Activated CD8-positive, alpha-beta T cell treated with anti-CD3 and anti-CD28 coated beads, Interleukin-2, amount 10 ng/mL, durations not matched to agents 7 days and 5 days (primary cell): ENCODE measurements at regions of chr22 and their contacts with region 1.

Region 1: DNA sequence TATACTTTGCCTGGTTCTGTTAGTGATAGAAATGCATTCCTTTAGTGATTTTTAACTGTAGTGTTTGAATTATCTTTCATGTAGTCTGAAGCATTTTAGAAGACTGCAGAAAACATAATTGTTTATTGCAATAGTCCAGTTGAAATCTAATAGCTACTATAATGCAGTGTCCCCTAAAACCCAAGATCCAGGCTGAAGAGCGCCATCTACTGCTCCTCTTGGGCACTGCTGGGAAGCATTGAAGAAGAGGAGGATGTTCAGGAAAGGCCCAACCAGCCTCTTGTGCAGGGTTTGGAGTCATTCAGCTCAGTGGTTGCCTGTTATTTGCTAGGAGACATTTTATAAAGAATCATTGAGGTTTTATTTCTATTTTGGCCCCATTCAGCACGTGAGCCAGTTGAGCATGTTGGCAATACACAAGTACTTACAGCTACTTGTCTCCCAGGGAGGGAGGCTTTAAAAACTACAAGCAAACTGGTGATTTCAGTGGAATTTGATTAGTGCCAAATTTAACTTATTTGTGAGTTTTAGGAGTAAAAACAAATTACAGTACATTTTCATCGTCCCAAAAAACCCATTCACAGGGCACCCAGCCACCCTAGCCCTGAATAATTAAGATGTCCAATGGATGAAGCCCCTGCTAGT is 74.9 kb upstream of the HORMAD2 start:
- DNase-seq: peak; percentile 68
- ATAC-seq: peak; percentile 57
- H3K4me3 Mint-ChIP-seq: no peak overlapping the region
- H3K27ac Mint-ChIP-seq: no peak overlapping the region
- H3K4me1 Mint-ChIP-seq: peaks cover 11% of the 10 kb centered on the region
- H3K27me3 Mint-ChIP-seq: no peaks in the 10 kb centered on the region

Region 2: GRCh38 chr22:29625090-29625825 is 380.1 kb before region 1 on chr22:
- CTCF ChIA-PET with region 1: interaction called, 17 read pairs
- POLR2A ChIA-PET with region 1: no interaction called
- DNase-seq: peak; percentile 55
- ATAC-seq: no peak
- H3K4me3 Mint-ChIP-seq: no peak overlapping the region
- H3K27ac Mint-ChIP-seq: peak overlapping the region; percentile 14
- H3K4me1 Mint-ChIP-seq: peaks cover 57% of the 10 kb centered on the region
- H3K27me3 Mint-ChIP-seq: no peaks in the 10 kb centered on the region

Region 3: DNA sequence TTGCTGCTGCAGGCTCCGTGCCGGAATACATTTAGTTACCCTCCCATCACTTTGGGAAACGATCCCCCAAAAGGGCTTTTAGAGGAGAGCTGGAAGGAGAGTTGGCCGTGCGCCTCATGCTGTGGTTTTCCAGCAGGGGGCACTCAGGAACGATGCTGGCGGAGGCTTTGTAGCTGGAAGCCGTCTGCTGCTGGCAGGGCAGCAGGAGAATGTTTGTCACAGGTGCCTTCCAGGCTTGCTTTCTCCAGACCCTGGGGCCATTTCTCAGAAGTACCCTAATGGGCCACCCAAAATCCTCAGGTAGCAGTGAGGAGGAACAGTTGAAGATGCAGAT is 315.5 kb before region 1 on chr22:
- CTCF ChIA-PET with region 1: interaction called, 24 read pairs
- POLR2A ChIA-PET with region 1: no interaction called
- DNase-seq: peak; percentile 53
- ATAC-seq: no peak
- H3K4me3 Mint-ChIP-seq: no peak overlapping the region
- H3K27ac Mint-ChIP-seq: no peak overlapping the region
- H3K4me1 Mint-ChIP-seq: no peaks in the 10 kb centered on the region
- H3K27me3 Mint-ChIP-seq: no peaks in the 10 kb centered on the region

Region 4: GRCh38 chr22:29758068-29758622 is 247.2 kb before region 1 on chr22:
- CTCF ChIA-PET with region 1: no interaction called
- POLR2A ChIA-PET with region 1: no interaction called
- DNase-seq: no peak
- ATAC-seq: no peak
- H3K4me3 Mint-ChIP-seq: no peak overlapping the region
- H3K27ac Mint-ChIP-seq: no peak overlapping the region
- H3K4me1 Mint-ChIP-seq: no peaks in the 10 kb centered on the region
- H3K27me3 Mint-ChIP-seq: no peaks in the 10 kb centered on the region

Region 5: GRCh38 chr22:29904020-29904419 is 101.3 kb before region 1 on chr22:
- CTCF ChIA-PET with region 1: interaction called, 10 read pairs
- POLR2A ChIA-PET with region 1: no interaction called
- DNase-seq: no peak
- ATAC-seq: no peak
- H3K4me3 Mint-ChIP-seq: no peak overlapping the region
- H3K27ac Mint-ChIP-seq: no peak overlapping the region
- H3K4me1 Mint-ChIP-seq: no peaks in the 10 kb centered on the region
- H3K27me3 Mint-ChIP-seq: no peaks in the 10 kb centered on the region

Region 6: DNA sequence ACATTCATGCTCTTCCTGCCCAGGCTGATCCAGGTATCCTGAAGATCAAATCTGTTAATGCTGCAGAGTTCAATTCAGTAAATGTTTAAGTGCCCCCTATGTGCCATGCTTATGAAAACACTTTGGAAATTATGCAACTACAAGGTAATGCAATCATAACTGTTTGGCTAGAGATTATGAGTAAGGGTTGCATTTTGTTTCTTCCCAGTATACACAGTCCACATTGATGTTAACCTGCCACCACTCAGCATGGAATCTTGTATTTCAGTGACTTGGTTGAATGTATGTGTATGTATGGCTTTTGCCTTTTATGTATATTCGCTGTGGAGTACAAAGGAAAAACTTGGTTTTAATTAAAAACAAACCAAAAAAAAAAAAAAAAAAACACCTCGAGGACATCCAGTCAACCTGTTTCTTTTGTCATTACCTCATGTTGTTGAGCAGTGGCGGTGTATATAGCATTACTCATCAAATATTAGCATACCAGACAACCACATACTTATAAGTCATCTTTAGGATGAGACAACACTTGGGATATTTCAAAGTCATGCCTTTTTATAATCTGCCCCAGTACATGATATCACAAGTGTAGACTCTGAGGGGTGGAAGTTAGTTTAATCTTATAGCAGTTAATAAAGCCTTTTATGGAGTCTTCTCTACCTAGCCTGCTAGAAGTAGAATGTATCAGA is 11.2 kb before region 1 on chr22:
- CTCF ChIA-PET with region 1: interaction called, 32 read pairs
- POLR2A ChIA-PET with region 1: interaction called, 4 read pairs
- DNase-seq: no peak
- ATAC-seq: no peak
- H3K4me3 Mint-ChIP-seq: no peak overlapping the region
- H3K27ac Mint-ChIP-seq: no peak overlapping the region
- H3K4me1 Mint-ChIP-seq: no peaks in the 10 kb centered on the region
- H3K27me3 Mint-ChIP-seq: no peaks in the 10 kb centered on the region

Region 7: DNA sequence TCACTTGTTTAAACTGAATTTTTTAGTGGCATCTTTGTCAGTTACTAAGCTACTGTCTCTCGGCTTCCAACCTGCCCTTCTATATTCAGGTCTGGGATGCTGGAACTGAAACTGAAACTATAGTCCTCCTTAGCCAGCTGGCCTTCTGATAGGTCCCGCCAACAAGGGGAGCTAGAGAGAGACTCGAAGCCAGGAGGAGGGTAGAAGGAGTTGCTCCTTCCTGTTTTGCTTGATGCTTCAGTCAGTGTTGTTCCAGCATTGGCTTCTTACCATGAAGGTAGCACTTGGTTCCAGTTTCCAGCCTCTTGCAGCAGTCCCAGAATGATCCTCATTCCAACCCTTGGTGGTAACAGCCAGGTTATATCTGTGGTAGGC is 42.0 kb after region 1 on chr22:
- CTCF ChIA-PET with region 1: interaction called, 10 read pairs
- POLR2A ChIA-PET with region 1: no interaction called
- DNase-seq: peak; percentile 69
- ATAC-seq: peak; percentile 98
- H3K4me3 Mint-ChIP-seq: no peak overlapping the region
- H3K27ac Mint-ChIP-seq: peak overlapping the region; percentile 67
- H3K4me1 Mint-ChIP-seq: peaks cover 11% of the 10 kb centered on the region
- H3K27me3 Mint-ChIP-seq: no peaks in the 10 kb centered on the region